Heart left ventricle (tissue), 16 donors: ENCODE measurements at regions of chr16 and their contacts with region 1.

Region 1: GRCh38 chr16:61555718-61556441 is 480.4 kb downstream of the CDH8 start:
- DNase-seq: peak in 1 of 5 donors; percentile 48
- ATAC-seq: no peak
- H3K4me3 ChIP-seq: no peak overlapping the region
- H3K27ac ChIP-seq: no peak overlapping the region
- H3K4me1 ChIP-seq: no peaks in the 10 kb centered on the region
- H3K27me3 ChIP-seq: no peaks in the 10 kb centered on the region
- CTCF ChIP-seq: no peak
- POLR2A ChIP-seq: no peak

Region 2: GRCh38 chr16:61500851-61501250 is 55.0 kb before region 1 on chr16:
- intact Hi-C with region 1: loop called in 1 of 10 experiments (anchors 10 kb)
- DNase-seq: no peak
- ATAC-seq: no peak
- H3K4me3 ChIP-seq: no peak overlapping the region
- H3K27ac ChIP-seq: no peak overlapping the region
- H3K4me1 ChIP-seq: no peaks in the 10 kb centered on the region
- H3K27me3 ChIP-seq: no peaks in the 10 kb centered on the region
- CTCF ChIP-seq: no peak
- POLR2A ChIP-seq: no peak